ENCODE measurements at regions of chr12 and their contacts with region 1.

Region 1: GRCh38 chr12:103626498-103626897 is 39.4 kb downstream of the STAB2 start:
- DNase-seq: peak; percentile 94
- H3K4me3 ChIP-seq: no peak overlapping the region
- H3K27ac ChIP-seq: peak overlapping the region in 2 of 4 donors; percentile 73 to 77
- H3K4me1 ChIP-seq: peaks cover 13 to 29% (median 18%) of the 10 kb centered on the region in 4 donors
- H3K27me3 ChIP-seq: no peaks in the 10 kb centered on the region
- CTCF ChIP-seq: peak in 1 of 3 experiments; percentile 62
- EP300 ChIP-seq: no peak
- POLR2A ChIP-seq: no peak

Region 2: GRCh38 chr12:102896067-102896466 is 730.4 kb before region 1 on chr12:
- intact Hi-C with region 1: no loop called
- DNase-seq: no peak
- H3K4me3 ChIP-seq: no peak overlapping the region
- H3K27ac ChIP-seq: no peak overlapping the region
- H3K4me1 ChIP-seq: no peaks in the 10 kb centered on the region
- H3K27me3 ChIP-seq: peaks cover 0 to 4% (median 0%) of the 10 kb centered on the region in 4 donors
- CTCF ChIP-seq: no peak
- EP300 ChIP-seq: no peak
- POLR2A ChIP-seq: no peak

Region 3: GRCh38 chr12:103758310-103759089 is 132.0 kb after region 1 on chr12:
- intact Hi-C with region 1: loop called (anchors 5 kb)
- DNase-seq: no peak
- H3K4me3 ChIP-seq: no peak overlapping the region
- H3K27ac ChIP-seq: no peak overlapping the region
- H3K4me1 ChIP-seq: no peaks in the 10 kb centered on the region
- H3K27me3 ChIP-seq: no peaks in the 10 kb centered on the region
- CTCF ChIP-seq: no peak
- EP300 ChIP-seq: no peak
- POLR2A ChIP-seq: no peak

Region 4: DNA sequence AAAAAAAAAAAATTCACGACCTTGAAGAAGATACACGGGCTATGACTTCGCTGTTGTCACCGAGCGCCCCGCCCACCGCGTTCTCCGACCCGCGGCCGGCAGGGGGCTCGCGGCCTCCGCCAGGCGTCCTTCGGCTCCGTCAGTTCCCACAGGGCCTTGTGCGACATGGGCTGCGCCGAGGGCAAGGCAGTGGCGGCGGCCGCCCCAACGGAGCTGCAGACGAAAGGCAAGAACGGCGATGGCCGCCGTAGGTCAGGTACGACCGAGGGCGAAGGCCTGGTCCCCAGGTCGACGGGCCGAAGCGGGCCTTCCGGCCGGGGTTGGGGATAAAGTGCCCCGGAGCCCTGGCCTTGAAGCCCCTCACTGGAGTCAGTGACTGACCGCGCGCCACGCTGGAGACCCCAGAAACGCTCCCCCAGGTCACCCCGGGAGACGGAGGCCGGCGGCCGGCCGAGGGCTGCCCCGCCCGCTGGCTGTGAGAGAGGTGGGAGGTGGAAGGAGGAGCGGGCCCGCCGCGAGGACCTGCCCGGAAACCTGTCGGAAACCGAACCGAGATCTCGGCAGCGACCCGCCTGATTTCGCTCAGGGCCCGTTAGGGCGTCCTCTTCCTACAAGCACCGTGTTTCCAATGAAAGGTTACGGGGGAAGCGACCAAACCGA is 589.3 kb after region 1 on chr12 and contains the start of gene TXNRD1:
- intact Hi-C with region 1: no loop called
- DNase-seq: peak; percentile 94
- H3K4me3 ChIP-seq: peak within 1 kb of the TSS; percentile 65 to 74 (median 65)
- H3K27ac ChIP-seq: peak within 1 kb of the TSS; percentile 81 to 89 (median 87)
- H3K4me1 ChIP-seq: peaks cover 23 to 39% (median 31%) of the 10 kb centered on the region in 4 donors
- H3K27me3 ChIP-seq: no peaks in the 10 kb centered on the region
- CTCF ChIP-seq: peak; percentile 85 to 87 (median 87)
- EP300 ChIP-seq: no peak
- POLR2A ChIP-seq: no peak
- total RNA-seq, gene TXNRD1: 243 to 594 (median 299) TPM

Measured in esophagus muscularis mucosa (tissue), 4 donors.